ENCODE measurements at regions of chr3 and their contacts with region 1.

Region 1: DNA sequence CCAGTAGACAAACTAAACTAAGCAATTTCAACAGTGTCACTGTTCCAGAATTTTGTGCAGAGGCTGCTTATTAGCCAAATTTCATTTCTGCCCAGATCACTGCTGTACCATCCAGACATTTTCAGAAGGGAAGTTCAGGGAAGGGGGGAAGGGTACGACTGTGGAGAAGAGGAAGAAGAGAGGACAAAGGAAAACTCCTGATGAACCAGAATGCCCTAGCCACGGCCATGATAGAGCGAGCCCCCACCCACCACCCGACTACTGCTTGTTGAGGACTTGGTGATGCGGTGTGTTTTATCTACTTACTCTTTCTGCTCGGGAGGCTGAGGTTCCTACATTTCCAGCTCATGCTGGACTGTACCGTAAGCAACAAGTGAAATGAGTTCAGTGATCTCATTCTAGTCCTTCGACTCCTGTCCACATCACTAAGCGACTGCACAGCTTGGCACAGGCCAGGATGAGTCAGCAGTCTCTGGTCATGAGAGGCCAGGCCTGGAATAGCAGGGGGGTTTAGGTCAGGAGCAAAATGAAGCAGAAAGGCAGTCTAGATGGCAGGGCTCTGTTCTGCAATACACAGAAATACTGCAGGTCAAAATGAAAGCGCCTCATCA is 330.8 kb downstream of the TIGIT start:
- DNase-seq: peak; percentile 27
- H3K4me3 ChIP-seq: peak overlapping the region; percentile 2 to 10
- H3K27ac ChIP-seq: peak overlapping the region; percentile 73 to 77
- H3K4me1 ChIP-seq: peaks cover 2% of the 10 kb centered on the region
- H3K27me3 ChIP-seq: no peaks in the 10 kb centered on the region
- CTCF ChIP-seq: no peak
- POLR2A ChIP-seq: no peak

Region 2: GRCh38 chr3:114323546-114324254 is 301.0 kb before region 1 on chr3:
- intact Hi-C with region 1: no loop called
- DNase-seq: no peak
- H3K4me3 ChIP-seq: no peak overlapping the region
- H3K27ac ChIP-seq: no peak overlapping the region
- H3K4me1 ChIP-seq: no peaks in the 10 kb centered on the region
- H3K27me3 ChIP-seq: no peaks in the 10 kb centered on the region
- CTCF ChIP-seq: no peak
- POLR2A ChIP-seq: no peak

Region 3: GRCh38 chr3:115092220-115092791 is 467.6 kb after region 1 on chr3:
- intact Hi-C with region 1: loop called (anchors 10 kb)
- DNase-seq: peak; percentile 62
- H3K4me3 ChIP-seq: no peak overlapping the region
- H3K27ac ChIP-seq: peak overlapping the region; percentile 10 to 29
- H3K4me1 ChIP-seq: peaks cover 4% of the 10 kb centered on the region
- H3K27me3 ChIP-seq: no peaks in the 10 kb centered on the region
- CTCF ChIP-seq: peak; percentile 24 to 75 (median 64)
- POLR2A ChIP-seq: no peak